ENCODE measurements at regions of chr12 and their contacts with region 1.

Region 1: GRCh38 chr12:89949457-89950195 is 241.0 kb upstream of the ATP2B1 start:
- DNase-seq: peak in 8 of 9 experiments; percentile 23 to 95 (median 55)
- ATAC-seq: peak; percentile 90
- H3K4me3 ChIP-seq: no peak overlapping the region
- H3K4me3 Mint-ChIP-seq: peak overlapping the region; percentile 53
- H3K27ac ChIP-seq: peak overlapping the region; percentile 25 to 53
- H3K27ac Mint-ChIP-seq: peak overlapping the region; percentile 75
- H3K4me1 ChIP-seq: peaks cover 36% of the 10 kb centered on the region
- H3K4me1 Mint-ChIP-seq: peaks cover 47% of the 10 kb centered on the region
- H3K27me3 ChIP-seq: no peaks in the 10 kb centered on the region
- H3K27me3 Mint-ChIP-seq: no peaks in the 10 kb centered on the region
- CTCF ChIP-seq: peak; percentile 45

Region 2: GRCh38 chr12:88141770-88142609 is 1807.6 kb before region 1 on chr12 and contains the starts of genes CEP290 and TMTC3:
- CTCF ChIA-PET with region 1: no interaction called
- POLR2A ChIA-PET with region 1: no interaction called
- intact Hi-C with region 1: loop called in 1 of 2 experiments (anchors 5 kb)
- DNase-seq: peak; percentile 81 to 99 (median 90)
- ATAC-seq: peak; percentile 92
- H3K4me3 ChIP-seq: peak within 1 kb of the TSS; percentile 82 to 84
- H3K4me3 Mint-ChIP-seq: peak within 1 kb of the TSS; percentile 99
- H3K27ac ChIP-seq: peak within 1 kb of the TSS; percentile 75 to 85
- H3K27ac Mint-ChIP-seq: peak within 1 kb of the TSS; percentile 97
- H3K4me1 ChIP-seq: peaks cover 18% of the 10 kb centered on the region
- H3K4me1 Mint-ChIP-seq: peaks cover 48% of the 10 kb centered on the region
- H3K27me3 ChIP-seq: no peaks in the 10 kb centered on the region
- H3K27me3 Mint-ChIP-seq: no peaks in the 10 kb centered on the region
- CTCF ChIP-seq: no peak
- total RNA-seq, gene CEP290: 7.7 to 10.7 TPM
- total RNA-seq, gene TMTC3: 3.9 to 4.4 TPM

Region 3: DNA sequence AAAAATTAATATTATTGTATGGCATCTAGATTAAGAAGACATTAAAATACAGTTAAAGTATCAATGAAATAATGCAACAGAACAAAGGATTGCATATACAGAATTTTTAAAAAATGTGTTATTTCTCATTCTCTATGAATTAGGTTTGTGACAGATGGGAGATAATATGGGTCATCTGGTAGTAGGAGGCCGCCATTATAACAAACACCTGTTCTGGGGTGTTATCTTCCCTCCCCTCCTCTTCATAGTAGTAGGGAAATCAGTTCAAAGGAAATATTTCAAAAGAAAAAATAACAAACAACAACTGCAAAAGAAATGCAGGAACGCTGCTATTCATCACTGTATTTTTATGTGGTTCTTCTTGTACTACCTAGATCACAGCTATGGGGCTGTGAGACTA is 54.0 kb before region 1 on chr12:
- CTCF ChIA-PET with region 1: no interaction called
- POLR2A ChIA-PET with region 1: no interaction called
- intact Hi-C with region 1: no loop called
- DNase-seq: no peak
- ATAC-seq: no peak
- H3K4me3 ChIP-seq: no peak overlapping the region
- H3K4me3 Mint-ChIP-seq: no peak overlapping the region
- H3K27ac ChIP-seq: no peak overlapping the region
- H3K27ac Mint-ChIP-seq: no peak overlapping the region
- H3K4me1 ChIP-seq: peaks cover 10% of the 10 kb centered on the region
- H3K4me1 Mint-ChIP-seq: peaks cover 23% of the 10 kb centered on the region
- H3K27me3 ChIP-seq: no peaks in the 10 kb centered on the region
- H3K27me3 Mint-ChIP-seq: no peaks in the 10 kb centered on the region
- CTCF ChIP-seq: no peak

Region 4: GRCh38 chr12:89960607-89961394 is 11.2 kb after region 1 on chr12:
- CTCF ChIA-PET with region 1: interaction called, 14 read pairs
- POLR2A ChIA-PET with region 1: no interaction called
- intact Hi-C with region 1: no loop called
- DNase-seq: peak in 2 of 9 experiments; percentile 13 to 15
- ATAC-seq: no peak
- H3K4me3 ChIP-seq: no peak overlapping the region
- H3K4me3 Mint-ChIP-seq: no peak overlapping the region
- H3K27ac ChIP-seq: no peak overlapping the region
- H3K27ac Mint-ChIP-seq: no peak overlapping the region
- H3K4me1 ChIP-seq: no peaks in the 10 kb centered on the region
- H3K4me1 Mint-ChIP-seq: peaks cover 2% of the 10 kb centered on the region
- H3K27me3 ChIP-seq: no peaks in the 10 kb centered on the region
- H3K27me3 Mint-ChIP-seq: no peaks in the 10 kb centered on the region
- CTCF ChIP-seq: no peak

Region 5: GRCh38 chr12:90102957-90103652 is 153.5 kb after region 1 on chr12:
- CTCF ChIA-PET with region 1: no interaction called
- POLR2A ChIA-PET with region 1: no interaction called
- intact Hi-C with region 1: loop called in 1 of 2 experiments (anchors 10 kb)
- DNase-seq: peak in 3 of 9 experiments; percentile 6 to 65 (median 53)
- ATAC-seq: peak; percentile 56
- H3K4me3 ChIP-seq: no peak overlapping the region
- H3K4me3 Mint-ChIP-seq: peak overlapping the region; percentile 68
- H3K27ac ChIP-seq: no peak overlapping the region
- H3K27ac Mint-ChIP-seq: no peak overlapping the region
- H3K4me1 ChIP-seq: no peaks in the 10 kb centered on the region
- H3K4me1 Mint-ChIP-seq: peaks cover 4% of the 10 kb centered on the region
- H3K27me3 ChIP-seq: no peaks in the 10 kb centered on the region
- H3K27me3 Mint-ChIP-seq: peaks cover 2% of the 10 kb centered on the region
- CTCF ChIP-seq: peak; percentile 70

Measured in CD8-positive, alpha-beta T cell (primary cell).